Mucosa of descending colon (tissue), 3 donors: ENCODE measurements at regions of chr3 and their contacts with region 1.

Region 1: GRCh38 chr3:149969940-149970715 is 567 bp downstream of the PFN2 start:
- DNase-seq: peak; percentile 91 to 96 (median 92)
- ATAC-seq: peak; percentile 86
- H3K4me3 ChIP-seq: peak overlapping the region; percentile 56
- H3K4me1 ChIP-seq: peaks cover 14% of the 10 kb centered on the region
- CTCF ChIP-seq: no peak

Region 2: GRCh38 chr3:149702691-149703441 is 267.3 kb before region 1 on chr3:
- intact Hi-C with region 1: no loop called
- DNase-seq: no peak
- ATAC-seq: peak; percentile 49
- H3K4me3 ChIP-seq: no peak overlapping the region
- H3K4me1 ChIP-seq: peaks cover 2% of the 10 kb centered on the region
- CTCF ChIP-seq: no peak

Region 3: GRCh38 chr3:150183678-150184425 is 213.7 kb after region 1 on chr3:
- intact Hi-C with region 1: loop called (anchors 5 to 10 kb)
- DNase-seq: peak; percentile 54 to 66 (median 56)
- ATAC-seq: peak; percentile 91
- H3K4me3 ChIP-seq: no peak overlapping the region
- H3K4me1 ChIP-seq: peaks cover 4% of the 10 kb centered on the region
- CTCF ChIP-seq: no peak

Region 4: DNA sequence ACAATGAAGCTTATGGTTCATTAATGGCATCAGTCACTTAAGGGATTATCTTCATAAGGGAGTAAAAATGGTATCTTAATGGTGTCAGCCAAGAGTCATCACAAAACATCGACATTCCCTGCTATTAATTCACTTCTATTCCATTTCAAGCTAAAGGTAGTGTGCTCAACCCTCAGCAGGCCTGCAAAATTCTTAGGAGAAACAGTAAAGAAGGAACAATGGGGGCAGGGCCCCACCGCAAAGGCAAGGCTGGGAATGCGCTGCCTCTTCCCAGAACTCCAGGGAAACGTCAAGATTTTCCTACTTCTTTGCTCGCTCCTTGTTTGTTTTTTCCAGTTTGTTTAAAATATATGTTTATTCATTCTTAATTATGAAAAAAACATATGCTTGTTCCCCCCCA is 250.7 kb after region 1 on chr3:
- intact Hi-C with region 1: loop called in 1 of 2 experiments (anchors 5 kb)
- DNase-seq: no peak
- ATAC-seq: no peak
- H3K4me3 ChIP-seq: no peak overlapping the region
- H3K4me1 ChIP-seq: peaks cover 3% of the 10 kb centered on the region
- CTCF ChIP-seq: no peak